Colonic mucosa (tissue), 4 donors: ENCODE measurements at regions of chr17 and their contacts with region 1.

Region 1: DNA sequence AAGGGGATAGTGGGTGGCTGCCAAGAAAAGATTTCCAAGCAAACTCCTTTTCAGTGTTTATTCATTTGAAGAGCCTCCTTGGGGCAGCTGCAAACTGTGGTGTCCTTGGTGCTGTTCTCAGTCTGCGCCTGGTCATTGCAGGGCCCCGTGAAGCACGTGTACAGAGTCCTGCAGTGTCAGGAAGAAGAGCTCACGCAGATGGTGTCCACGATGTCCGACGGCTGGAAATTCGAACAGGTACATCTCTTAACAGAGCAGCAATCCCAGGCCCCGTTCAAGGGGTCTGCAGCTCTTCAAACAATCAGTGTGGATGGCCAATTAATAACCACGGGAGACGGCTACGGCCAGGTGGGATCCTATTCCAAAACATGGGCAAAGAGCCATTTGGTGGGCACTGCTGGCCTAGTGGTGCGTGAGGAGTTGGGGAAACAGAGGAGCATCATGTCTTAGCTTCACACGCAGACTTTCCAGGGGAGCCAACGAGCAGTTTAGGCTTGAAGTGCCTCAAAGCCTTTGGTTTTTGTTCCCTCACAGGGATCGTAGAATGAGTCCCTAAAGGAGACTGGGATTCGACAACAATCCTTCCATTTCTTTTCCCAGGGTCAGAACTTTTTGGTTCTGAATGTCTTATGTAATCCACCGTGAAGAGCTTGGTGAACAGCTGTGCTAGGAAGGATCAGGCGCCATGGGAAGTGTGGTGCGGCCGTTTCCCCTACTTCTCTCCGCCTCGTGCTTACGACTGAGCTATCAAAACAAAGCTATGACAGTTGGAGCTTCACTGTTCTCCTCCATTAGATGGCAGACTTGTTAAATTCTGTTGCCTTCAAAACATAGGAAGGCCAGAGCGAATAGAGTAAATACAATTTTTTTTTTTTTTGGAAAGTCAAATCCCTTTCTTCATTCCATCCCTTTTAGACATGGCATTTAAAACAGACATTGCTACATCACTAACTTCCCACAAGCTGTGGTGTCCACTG is 12.6 kb downstream of the KCTD2 start:
- DNase-seq: no peak
- H3K4me3 ChIP-seq: no peak overlapping the region
- H3K27ac ChIP-seq: peak overlapping the region; percentile 19
- H3K4me1 ChIP-seq: no peaks in the 10 kb centered on the region
- H3K27me3 ChIP-seq: no peaks in the 10 kb centered on the region
- CTCF ChIP-seq: no peak

Region 2: GRCh38 chr17:75087558-75088453 is 28.1 kb after region 1 on chr17 and contains the start of gene SLC16A5:
- intact Hi-C with region 1: no loop called
- DNase-seq: peak; percentile 94
- H3K4me3 ChIP-seq: peak within 1 kb of the TSS; percentile 82
- H3K27ac ChIP-seq: peak within 1 kb of the TSS; percentile 99
- H3K4me1 ChIP-seq: peaks cover 24% of the 10 kb centered on the region
- H3K27me3 ChIP-seq: no peaks in the 10 kb centered on the region
- CTCF ChIP-seq: no peak
- total RNA-seq, gene SLC16A5: 19.4 to 50.1 TPM

Region 3: GRCh38 chr17:75199886-75200618 is 140.4 kb after region 1 on chr17:
- intact Hi-C with region 1: loop called (anchors 5 kb)
- DNase-seq: no peak
- H3K4me3 ChIP-seq: no peak overlapping the region
- H3K27ac ChIP-seq: no peak overlapping the region
- H3K4me1 ChIP-seq: no peaks in the 10 kb centered on the region
- H3K27me3 ChIP-seq: no peaks in the 10 kb centered on the region
- CTCF ChIP-seq: no peak